Common myeloid progenitor, CD34-positive (primary cell): ENCODE measurements at regions of chr13 and their contacts with region 1.

Region 1: GRCh38 chr13:45280751-45281634 is 60.0 kb downstream of the TPT1 start:
- DNase-seq: peak; percentile 64 to 83 (median 81)
- H3K4me3 ChIP-seq: no peak overlapping the region
- H3K27ac ChIP-seq: no peak overlapping the region
- H3K4me1 ChIP-seq: no peaks in the 10 kb centered on the region
- H3K27me3 ChIP-seq: no peaks in the 10 kb centered on the region

Region 2: GRCh38 chr13:45042539-45042938 is 238.5 kb before region 1 on chr13:
- CTCF ChIA-PET with region 1: interaction called, 97 read pairs
- POLR2A ChIA-PET with region 1: no interaction called
- DNase-seq: no peak
- H3K4me3 ChIP-seq: no peak overlapping the region
- H3K27ac ChIP-seq: no peak overlapping the region
- H3K4me1 ChIP-seq: peaks cover 0 to 4% (median 1%) of the 10 kb centered on the region in 4 experiments
- H3K27me3 ChIP-seq: no peaks in the 10 kb centered on the region

Region 3: DNA sequence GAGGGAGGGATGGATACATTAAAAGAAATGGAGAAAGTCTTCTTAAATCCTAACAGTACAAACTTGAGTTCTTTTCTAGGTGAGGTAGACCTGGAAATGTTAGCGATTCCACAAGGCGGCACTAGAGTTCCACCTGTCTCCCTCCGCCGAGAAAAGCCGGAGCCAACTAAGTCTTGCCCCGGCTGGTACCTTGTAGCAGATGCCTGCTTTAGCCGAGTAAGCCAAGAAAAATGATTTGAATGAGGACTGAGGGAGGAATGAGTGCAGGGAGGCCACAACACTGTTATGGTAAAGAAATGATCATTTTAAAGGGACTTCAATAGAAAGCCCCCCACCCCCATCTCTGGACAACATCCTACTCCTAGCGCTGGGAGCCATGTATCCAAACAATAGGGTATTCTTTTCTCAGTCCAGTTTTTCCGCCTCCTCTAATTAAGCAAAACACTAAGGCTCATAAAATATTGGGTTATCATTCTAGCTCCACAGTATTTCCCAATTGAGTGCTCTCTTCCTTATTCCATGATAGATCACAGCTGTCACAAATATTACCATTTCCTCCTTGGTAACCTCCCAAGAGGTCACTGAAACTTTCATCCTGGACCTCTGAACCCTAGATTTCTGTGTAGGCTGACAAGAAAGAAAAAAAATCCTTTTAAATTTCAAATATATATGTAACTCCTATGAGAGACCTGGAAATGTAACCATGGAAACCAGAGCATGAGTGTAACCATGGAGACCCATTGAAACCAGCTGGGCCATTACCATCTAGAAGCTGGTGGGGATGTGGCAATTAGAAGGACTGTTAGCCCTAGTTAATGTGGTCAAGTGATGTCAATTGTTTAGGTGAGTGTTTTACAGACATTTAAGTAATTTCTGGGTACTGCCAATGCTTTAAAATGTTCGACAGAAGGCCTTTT is 233.3 kb before region 1 on chr13:
- CTCF ChIA-PET with region 1: interaction called, 97 read pairs
- POLR2A ChIA-PET with region 1: no interaction called
- DNase-seq: peak; percentile 79 to 91 (median 86)
- H3K4me3 ChIP-seq: peak overlapping the region in 6 of 7 experiments; percentile 63 to 89 (median 72)
- H3K27ac ChIP-seq: no peak overlapping the region
- H3K4me1 ChIP-seq: peaks cover 0 to 4% (median 1%) of the 10 kb centered on the region in 4 experiments
- H3K27me3 ChIP-seq: no peaks in the 10 kb centered on the region

Region 4: GRCh38 chr13:45292176-45292575 is 11.2 kb after region 1 on chr13:
- CTCF ChIA-PET with region 1: interaction called, 42 read pairs
- POLR2A ChIA-PET with region 1: no interaction called
- DNase-seq: no peak
- H3K4me3 ChIP-seq: no peak overlapping the region
- H3K27ac ChIP-seq: no peak overlapping the region
- H3K4me1 ChIP-seq: peaks cover 0 to 7% (median 3%) of the 10 kb centered on the region in 4 experiments
- H3K27me3 ChIP-seq: no peaks in the 10 kb centered on the region

Region 5: GRCh38 chr13:45297456-45298205 is 16.6 kb after region 1 on chr13:
- CTCF ChIA-PET with region 1: interaction called, 42 read pairs
- POLR2A ChIA-PET with region 1: no interaction called
- DNase-seq: no peak
- H3K4me3 ChIP-seq: no peak overlapping the region
- H3K27ac ChIP-seq: no peak overlapping the region
- H3K4me1 ChIP-seq: peaks cover 0 to 7% (median 3%) of the 10 kb centered on the region in 4 experiments
- H3K27me3 ChIP-seq: peaks cover 0 to 6% (median 5%) of the 10 kb centered on the region in 5 experiments

Region 6: DNA sequence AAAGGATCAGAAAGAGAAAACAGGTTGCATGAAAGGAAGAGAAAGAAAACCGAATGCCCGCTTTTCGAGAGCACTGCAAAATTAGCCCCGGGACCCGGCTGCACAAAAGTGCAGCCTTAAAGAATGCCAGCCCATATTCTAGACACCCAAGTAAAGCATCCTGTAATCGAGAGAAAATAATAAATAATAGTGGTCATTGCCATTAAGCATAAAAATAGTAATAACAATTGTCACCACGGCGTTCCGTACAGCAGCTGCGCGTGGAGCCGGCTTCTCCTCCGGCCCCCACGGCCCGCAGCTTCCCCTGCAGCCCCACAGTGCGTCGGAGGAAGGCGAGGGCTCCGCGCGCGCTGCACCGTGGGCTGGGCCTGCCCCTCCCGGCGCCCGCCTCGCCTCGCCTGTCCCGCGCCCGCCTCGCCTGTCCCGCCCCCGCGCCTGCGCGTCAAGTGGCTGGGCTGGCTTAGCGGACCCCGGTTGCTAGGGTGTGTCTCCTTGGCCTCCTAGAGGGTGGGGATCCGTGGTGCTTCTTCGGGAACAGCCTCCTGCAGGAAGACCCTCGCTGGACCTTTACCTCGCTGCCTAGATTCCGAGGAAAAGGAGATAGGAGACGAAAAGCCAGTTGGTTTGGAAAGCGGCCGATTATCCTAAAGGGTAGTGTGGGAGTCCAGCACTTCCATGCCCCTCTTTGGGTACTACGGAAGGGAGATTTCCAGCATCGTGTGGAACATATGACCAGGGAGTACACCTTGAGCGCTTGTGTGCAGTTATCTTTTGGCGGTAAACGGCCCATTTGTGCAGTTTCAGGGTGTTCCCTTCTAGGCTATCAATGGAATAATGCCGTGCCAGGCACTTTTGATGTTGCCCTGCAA is 930.7 kb after region 1 on chr13 and contains the start of gene LRRC63:
- CTCF ChIA-PET with region 1: no interaction called
- POLR2A ChIA-PET with region 1: no interaction called
- DNase-seq: peak; percentile 85 to 94 (median 91)
- H3K4me3 ChIP-seq: peak within 1 kb of the TSS; percentile 52 to 98 (median 91)
- H3K27ac ChIP-seq: peak within 1 kb of the TSS; percentile 76 to 89
- H3K4me1 ChIP-seq: peaks cover 7 to 39% (median 21%) of the 10 kb centered on the region in 4 experiments
- H3K27me3 ChIP-seq: no peaks in the 10 kb centered on the region